ENCODE measurements at regions of chr17 and their contacts with region 1.

Region 1: GRCh38 chr17:17237026-17237799 is at the start of gene FLCN:
- DNase-seq: peak; percentile 65
- ATAC-seq: peak; percentile 96
- H3K4me3 ChIP-seq: peak within 1 kb of the TSS; percentile 97
- H3K27ac ChIP-seq: peak within 1 kb of the TSS; percentile 100
- H3K4me1 ChIP-seq: peaks cover 6% of the 10 kb centered on the region
- H3K27me3 ChIP-seq: no peaks in the 10 kb centered on the region
- CTCF ChIP-seq: no peak
- EP300 ChIP-seq: no peak
- POLR2A ChIP-seq: peak; percentile 90
- RAD21 ChIP-seq: no peak
- polyA plus RNA-seq, gene FLCN: 1.1 to 1.7 TPM

Region 2: DNA sequence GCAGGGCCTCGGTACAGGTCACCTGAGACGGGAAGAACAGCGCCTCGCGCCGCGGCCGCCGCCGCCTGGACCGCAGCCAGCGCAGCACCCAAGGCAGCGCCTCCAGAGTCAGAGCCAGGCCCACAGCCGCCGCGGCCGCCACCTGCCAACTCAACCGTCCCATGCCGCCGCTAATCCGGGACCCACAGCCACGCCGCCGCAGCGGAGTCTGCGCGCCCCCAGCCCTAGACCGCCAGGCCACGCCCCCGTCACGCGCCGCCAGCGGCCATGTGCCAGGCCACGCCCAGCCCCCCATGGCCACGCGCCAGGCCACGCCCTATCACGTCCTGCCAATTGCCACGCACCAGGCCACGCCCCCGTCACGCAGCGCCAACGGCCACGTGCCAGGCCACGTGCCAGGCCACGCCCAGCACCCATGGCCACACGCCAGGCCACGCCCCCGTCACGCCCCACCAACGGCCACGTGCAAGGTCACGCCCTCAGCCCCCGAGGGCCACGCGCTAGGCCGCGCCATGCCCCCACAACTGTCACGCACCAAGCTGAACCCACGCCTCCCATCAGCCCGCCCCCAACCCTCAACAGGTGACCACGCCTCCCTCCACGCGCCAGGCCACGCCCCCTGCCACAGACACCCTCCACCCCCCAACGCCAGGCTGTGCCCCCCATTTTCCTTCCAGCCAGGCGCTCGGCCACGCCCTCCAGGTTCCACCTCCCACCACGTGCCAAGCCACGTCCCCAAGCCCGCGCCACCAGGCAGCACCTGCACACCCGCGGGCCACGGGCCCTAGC is 30.9 kb before region 1 on chr17 and contains the start of gene PLD6:
- CTCF ChIA-PET with region 1: no interaction called
- POLR2A ChIA-PET with region 1: interaction called, 3 read pairs
- RAD21 ChIA-PET with region 1: interaction called, 3 read pairs
- SMC1A ChIA-PET with region 1: no interaction called
- in situ Hi-C with region 1: no loop called
- intact Hi-C with region 1: loop called (anchors 1 kb)
- DNase-seq: peak; percentile 72
- ATAC-seq: peak; percentile 83
- H3K4me3 ChIP-seq: peak within 1 kb of the TSS; percentile 74
- H3K27ac ChIP-seq: peak within 1 kb of the TSS; percentile 58
- H3K4me1 ChIP-seq: peaks cover 9% of the 10 kb centered on the region; the same call in 1 of the 2 replicates
- H3K27me3 ChIP-seq: no peaks in the 10 kb centered on the region
- CTCF ChIP-seq: no peak
- EP300 ChIP-seq: no peak
- POLR2A ChIP-seq: peak; percentile 86
- RAD21 ChIP-seq: no peak
- polyA plus RNA-seq, gene PLD6: 4.7 to 21.4 TPM

Region 3: DNA sequence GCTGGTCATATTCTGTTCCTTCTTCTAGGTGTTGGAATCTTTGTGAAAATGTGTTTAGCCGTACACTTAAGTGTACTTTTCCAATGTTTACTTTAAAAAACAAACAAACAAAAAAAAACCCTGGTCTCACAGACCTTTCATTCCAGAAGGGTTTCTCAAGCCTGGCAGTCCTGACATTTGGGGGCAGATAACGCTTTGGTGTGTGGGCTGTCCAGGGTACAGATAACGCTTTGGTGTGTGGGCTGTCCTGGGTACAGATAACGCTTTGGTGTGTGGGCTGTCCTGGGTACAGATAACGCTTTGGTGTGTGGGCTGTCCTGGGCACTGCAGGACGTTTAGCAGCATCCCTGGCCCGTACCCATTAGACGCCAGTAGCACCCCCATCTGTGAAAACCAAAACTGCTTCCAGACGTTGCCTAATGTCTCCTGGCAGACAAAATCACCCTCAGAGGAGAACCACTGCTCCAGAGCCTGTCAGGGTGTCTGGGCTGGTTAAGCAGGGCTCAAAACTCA is 15.0 kb after region 1 on chr17:
- CTCF ChIA-PET with region 1: no interaction called
- POLR2A ChIA-PET with region 1: no interaction called
- RAD21 ChIA-PET with region 1: no interaction called
- SMC1A ChIA-PET with region 1: no interaction called
- in situ Hi-C with region 1: no loop called
- intact Hi-C with region 1: no loop called
- DNase-seq: no peak
- ATAC-seq: no peak
- H3K4me3 ChIP-seq: no peak overlapping the region
- H3K27ac ChIP-seq: no peak overlapping the region
- H3K4me1 ChIP-seq: no peaks in the 10 kb centered on the region
- H3K27me3 ChIP-seq: no peaks in the 10 kb centered on the region
- CTCF ChIP-seq: no peak
- EP300 ChIP-seq: no peak
- POLR2A ChIP-seq: no peak
- RAD21 ChIP-seq: no peak